ENCODE measurements at regions of chr3 and their contacts with region 1.

Region 1: DNA sequence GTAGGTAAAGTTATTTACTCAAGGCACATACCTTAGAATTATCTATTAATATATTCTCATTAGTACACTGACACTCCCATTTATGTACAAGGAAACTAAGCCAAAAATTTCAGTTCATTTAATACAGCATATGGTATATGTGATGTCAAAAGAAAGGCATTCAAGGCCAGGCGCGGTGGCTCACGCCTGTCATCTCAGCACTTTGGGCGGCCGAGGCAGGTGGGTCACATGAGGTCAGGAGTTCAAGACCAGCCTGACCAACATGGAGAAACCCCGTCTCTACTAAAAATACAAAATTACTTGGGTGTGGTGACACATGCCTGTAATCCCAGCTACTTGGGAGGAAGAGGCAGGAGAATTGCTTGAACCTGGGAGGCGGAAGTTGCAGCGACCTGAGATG is 435.2 kb downstream of the GBE1 start:
- DNase-seq: no peak
- H3K4me3 ChIP-seq: no peak overlapping the region
- H3K27ac ChIP-seq: no peak overlapping the region
- H3K4me1 ChIP-seq: no peaks in the 10 kb centered on the region
- H3K27me3 ChIP-seq: no peaks in the 10 kb centered on the region
- CTCF ChIP-seq: no peak

Region 2: DNA sequence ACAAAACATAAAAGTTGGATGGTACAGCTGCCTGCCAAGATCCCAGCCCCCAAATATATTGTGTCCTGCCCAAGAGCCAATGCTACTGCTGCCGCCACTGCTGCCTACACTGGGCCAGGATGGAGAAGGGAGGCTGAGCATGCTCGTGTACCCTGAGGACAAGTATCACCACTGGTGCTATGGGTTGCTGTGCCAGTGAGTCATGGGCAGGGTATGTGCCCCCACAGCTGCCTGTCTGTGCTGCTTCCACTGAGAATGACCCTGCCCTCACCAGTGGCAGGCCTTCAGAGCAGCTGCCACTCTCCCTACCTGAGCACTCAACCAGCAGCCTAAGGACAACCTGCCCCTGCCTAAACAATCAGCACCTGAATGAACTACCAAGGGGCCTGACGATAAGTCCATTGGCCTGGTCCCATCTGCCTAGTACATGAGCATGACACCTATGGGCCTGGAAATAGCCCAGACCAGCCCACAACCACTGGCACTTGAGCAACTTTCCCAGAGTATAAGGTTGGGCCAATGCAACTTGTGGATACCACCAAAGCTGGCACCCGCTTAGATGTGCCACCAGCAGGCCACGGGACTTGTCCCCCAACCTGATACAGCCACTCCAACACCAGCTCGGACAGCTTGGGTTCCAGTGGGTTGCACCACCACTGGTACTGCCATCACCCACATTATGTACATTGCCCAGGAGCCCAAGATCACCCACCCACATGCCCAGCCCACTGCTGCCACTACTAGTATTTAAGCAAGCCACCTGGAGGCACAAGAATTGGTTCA is 53.8 kb after region 1 on chr3:
- intact Hi-C with region 1: loop called (anchors 2 kb)
- DNase-seq: no peak
- H3K4me3 ChIP-seq: no peak overlapping the region
- H3K27ac ChIP-seq: no peak overlapping the region
- H3K4me1 ChIP-seq: no peaks in the 10 kb centered on the region
- H3K27me3 ChIP-seq: no peaks in the 10 kb centered on the region
- CTCF ChIP-seq: no peak

Measured in tibial artery (tissue), 4 donors.